ENCODE measurements at regions of chr5 and their contacts with region 1.

Region 1: DNA sequence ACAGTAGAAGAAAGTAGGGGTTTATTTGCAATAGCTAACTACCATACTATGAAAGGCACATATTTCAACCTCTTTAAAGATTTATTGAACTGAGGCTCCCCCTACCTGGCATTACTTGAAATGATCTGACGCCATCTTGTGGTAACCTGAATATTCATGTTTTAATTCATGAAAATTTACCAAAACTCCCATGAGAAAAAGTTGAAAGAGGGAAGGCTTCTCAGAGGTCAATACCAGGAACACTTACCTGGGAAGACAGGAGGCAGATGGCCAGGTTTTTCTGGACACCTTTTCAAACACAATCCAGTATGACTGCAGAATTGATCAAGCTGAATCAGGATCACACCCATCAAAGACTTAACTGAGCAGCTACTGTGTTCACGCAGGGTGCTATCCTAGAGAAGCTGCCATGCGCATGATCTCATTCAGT is 9.4 kb downstream of the PRELID2 start:
- DNase-seq: peak; percentile 56
- H3K4me3 ChIP-seq: no peak overlapping the region
- H3K27ac ChIP-seq: no peak overlapping the region
- H3K4me1 ChIP-seq: peaks cover 21% of the 10 kb centered on the region
- H3K27me3 ChIP-seq: no peaks in the 10 kb centered on the region
- CTCF ChIP-seq: peak; percentile 54 to 59
- POLR2A ChIP-seq: no peak

Region 2: GRCh38 chr5:144467792-144468191 is 1358.0 kb before region 1 on chr5:
- CTCF ChIA-PET with region 1: interaction called, 10 read pairs
- POLR2A ChIA-PET with region 1: no interaction called
- dilution Hi-C with region 1: no loop called
- intact Hi-C with region 1: no loop called
- DNase-seq: peak; percentile 40
- H3K4me3 ChIP-seq: no peak overlapping the region
- H3K27ac ChIP-seq: no peak overlapping the region
- H3K4me1 ChIP-seq: no peaks in the 10 kb centered on the region
- H3K27me3 ChIP-seq: no peaks in the 10 kb centered on the region
- CTCF ChIP-seq: peak; percentile 41 to 55
- POLR2A ChIP-seq: no peak

Region 3: GRCh38 chr5:145347026-145347616 is 478.6 kb before region 1 on chr5:
- CTCF ChIA-PET with region 1: interaction called, 5 read pairs
- POLR2A ChIA-PET with region 1: no interaction called
- dilution Hi-C with region 1: no loop called
- intact Hi-C with region 1: loop called (anchors 10 kb)
- DNase-seq: peak; percentile 64
- H3K4me3 ChIP-seq: no peak overlapping the region
- H3K27ac ChIP-seq: no peak overlapping the region
- H3K4me1 ChIP-seq: peaks cover 21% of the 10 kb centered on the region
- H3K27me3 ChIP-seq: no peaks in the 10 kb centered on the region
- CTCF ChIP-seq: peak; percentile 50 to 64
- POLR2A ChIP-seq: no peak

Region 4: DNA sequence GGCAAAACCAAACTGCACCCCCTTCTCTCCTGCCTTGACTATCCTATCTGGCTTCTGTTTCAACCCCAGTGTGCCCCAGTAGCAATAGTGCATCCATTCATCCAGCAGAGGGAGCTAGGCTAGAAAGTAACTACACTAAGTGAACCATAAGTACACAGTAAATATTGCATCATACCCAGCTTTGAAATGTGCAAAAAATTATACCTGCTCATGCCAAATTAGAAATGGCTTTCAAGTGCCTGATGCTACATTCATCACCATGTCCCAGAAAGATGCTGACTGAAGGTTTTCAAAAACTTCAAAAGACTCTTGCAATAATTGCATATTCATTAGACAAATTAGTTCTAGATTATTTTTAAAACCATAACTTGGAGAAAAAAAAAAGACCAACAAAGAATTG is 144.1 kb before region 1 on chr5:
- CTCF ChIA-PET with region 1: interaction called, 97 read pairs
- POLR2A ChIA-PET with region 1: no interaction called
- dilution Hi-C with region 1: no loop called
- intact Hi-C with region 1: loop called (anchors 1 kb)
- DNase-seq: peak; percentile 75
- H3K4me3 ChIP-seq: no peak overlapping the region
- H3K27ac ChIP-seq: no peak overlapping the region
- H3K4me1 ChIP-seq: no peaks in the 10 kb centered on the region
- H3K27me3 ChIP-seq: no peaks in the 10 kb centered on the region
- CTCF ChIP-seq: peak; percentile 78 to 86
- POLR2A ChIP-seq: no peak

Region 5: GRCh38 chr5:145752947-145753346 is 72.8 kb before region 1 on chr5:
- CTCF ChIA-PET with region 1: interaction called, 4 read pairs
- POLR2A ChIA-PET with region 1: no interaction called
- dilution Hi-C with region 1: no loop called
- intact Hi-C with region 1: loop called (anchors 2 kb)
- DNase-seq: peak; percentile 76
- H3K4me3 ChIP-seq: peak overlapping the region in 1 of 3 experiments; percentile 27
- H3K27ac ChIP-seq: peak overlapping the region; percentile 51
- H3K4me1 ChIP-seq: peaks cover 27% of the 10 kb centered on the region
- H3K27me3 ChIP-seq: no peaks in the 10 kb centered on the region
- CTCF ChIP-seq: no peak
- POLR2A ChIP-seq: no peak

Region 6: GRCh38 chr5:146049014-146049703 is 223.4 kb after region 1 on chr5:
- CTCF ChIA-PET with region 1: interaction called, 11 read pairs
- POLR2A ChIA-PET with region 1: no interaction called
- dilution Hi-C with region 1: no loop called
- intact Hi-C with region 1: loop called (anchors 1 kb)
- DNase-seq: peak; percentile 74
- H3K4me3 ChIP-seq: no peak overlapping the region
- H3K27ac ChIP-seq: no peak overlapping the region
- H3K4me1 ChIP-seq: no peaks in the 10 kb centered on the region
- H3K27me3 ChIP-seq: peaks cover 0 to 7% of the 10 kb centered on the region in 2 experiments
- CTCF ChIP-seq: peak; percentile 75
- POLR2A ChIP-seq: no peak

Measured in endothelial cell of umbilical vein (primary cell).